ENCODE measurements at regions of chr2 and their contacts with region 1.

Region 1: GRCh38 chr2:174577967-174578589 is 19.5 kb downstream of the WIPF1 start:
- DNase-seq: peak; percentile 68
- ATAC-seq: peak; percentile 74
- H3K4me3 Mint-ChIP-seq: no peak overlapping the region
- H3K27ac Mint-ChIP-seq: peak overlapping the region; percentile 31
- H3K4me1 Mint-ChIP-seq: peaks cover 72% of the 10 kb centered on the region
- H3K27me3 Mint-ChIP-seq: no peaks in the 10 kb centered on the region

Region 2: GRCh38 chr2:174522553-174522952 is 55.5 kb before region 1 on chr2:
- CTCF ChIA-PET with region 1: no interaction called
- POLR2A ChIA-PET with region 1: no interaction called
- intact Hi-C with region 1: no loop called
- DNase-seq: no peak
- ATAC-seq: no peak
- H3K4me3 Mint-ChIP-seq: no peak overlapping the region
- H3K27ac Mint-ChIP-seq: no peak overlapping the region
- H3K4me1 Mint-ChIP-seq: peaks cover 10% of the 10 kb centered on the region
- H3K27me3 Mint-ChIP-seq: peaks cover 2% of the 10 kb centered on the region

Region 3: DNA sequence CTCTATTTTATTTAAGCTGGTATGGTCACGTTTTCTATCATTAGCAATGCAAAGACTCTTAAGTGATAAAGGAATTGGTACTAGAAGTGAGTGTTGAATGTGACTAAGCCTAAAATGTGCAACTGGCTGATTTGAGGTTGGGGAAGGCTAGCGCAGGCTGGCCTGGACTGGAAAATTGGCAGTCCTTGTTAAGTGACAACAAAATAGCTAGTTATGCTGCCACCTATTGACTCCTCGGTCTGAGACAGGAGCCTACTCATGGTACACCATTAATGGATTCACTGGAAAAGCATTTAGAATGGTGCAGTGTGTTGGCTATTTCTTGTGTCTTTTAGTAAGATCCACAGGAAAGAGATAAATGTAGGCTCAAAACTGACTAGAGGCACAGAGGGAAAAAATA is 25.2 kb after region 1 on chr2:
- CTCF ChIA-PET with region 1: interaction called, 64 read pairs
- POLR2A ChIA-PET with region 1: no interaction called
- intact Hi-C with region 1: loop called (anchors 1 kb)
- DNase-seq: peak; percentile 78
- ATAC-seq: peak; percentile 63
- H3K4me3 Mint-ChIP-seq: no peak overlapping the region
- H3K27ac Mint-ChIP-seq: peak overlapping the region; percentile 84
- H3K4me1 Mint-ChIP-seq: peaks cover 91% of the 10 kb centered on the region
- H3K27me3 Mint-ChIP-seq: no peaks in the 10 kb centered on the region

Region 4: GRCh38 chr2:174682578-174683391 is 104.7 kb after region 1 on chr2:
- CTCF ChIA-PET with region 1: interaction called, 172 read pairs
- POLR2A ChIA-PET with region 1: no interaction called
- intact Hi-C with region 1: loop called in 1 of 2 experiments (anchors 1 kb)
- DNase-seq: peak; percentile 66
- ATAC-seq: peak; percentile 66
- H3K4me3 Mint-ChIP-seq: peak overlapping the region; percentile 82
- H3K27ac Mint-ChIP-seq: peak overlapping the region; percentile 90
- H3K4me1 Mint-ChIP-seq: peaks cover 48% of the 10 kb centered on the region
- H3K27me3 Mint-ChIP-seq: no peaks in the 10 kb centered on the region

Region 5: DNA sequence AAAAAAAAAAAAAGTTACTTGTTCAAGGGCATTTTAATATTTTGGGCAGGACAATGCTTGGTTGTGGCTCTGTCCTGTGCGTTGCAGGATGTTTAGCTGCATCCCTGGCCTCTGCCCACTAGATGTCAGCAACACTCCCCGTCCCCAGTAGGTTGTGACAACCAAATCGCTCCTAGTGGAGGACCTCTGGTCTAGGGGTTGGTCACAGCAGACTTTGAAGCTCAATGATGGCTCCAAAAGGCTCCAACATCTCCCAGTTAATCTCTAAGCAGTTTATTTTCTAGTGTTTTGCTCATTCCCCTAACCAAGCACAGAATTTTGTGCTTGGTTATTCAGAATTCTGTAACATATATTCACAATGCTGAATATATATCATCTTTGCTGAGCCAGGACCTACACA is 119.2 kb after region 1 on chr2:
- CTCF ChIA-PET with region 1: interaction called, 10 read pairs
- POLR2A ChIA-PET with region 1: no interaction called
- intact Hi-C with region 1: no loop called
- DNase-seq: peak; percentile 80
- ATAC-seq: peak; percentile 99
- H3K4me3 Mint-ChIP-seq: no peak overlapping the region
- H3K27ac Mint-ChIP-seq: no peak overlapping the region
- H3K4me1 Mint-ChIP-seq: no peaks in the 10 kb centered on the region
- H3K27me3 Mint-ChIP-seq: peaks cover 3% of the 10 kb centered on the region